Activated CD4-positive, alpha-beta T cell treated with anti-CD3 and anti-CD28 coated beads, Interleukin-2, amount 10 ng/mL, durations not matched to agents 24 days and 14 days (primary cell): ENCODE measurements at regions of chr12 and their contacts with region 1.

Region 1: DNA sequence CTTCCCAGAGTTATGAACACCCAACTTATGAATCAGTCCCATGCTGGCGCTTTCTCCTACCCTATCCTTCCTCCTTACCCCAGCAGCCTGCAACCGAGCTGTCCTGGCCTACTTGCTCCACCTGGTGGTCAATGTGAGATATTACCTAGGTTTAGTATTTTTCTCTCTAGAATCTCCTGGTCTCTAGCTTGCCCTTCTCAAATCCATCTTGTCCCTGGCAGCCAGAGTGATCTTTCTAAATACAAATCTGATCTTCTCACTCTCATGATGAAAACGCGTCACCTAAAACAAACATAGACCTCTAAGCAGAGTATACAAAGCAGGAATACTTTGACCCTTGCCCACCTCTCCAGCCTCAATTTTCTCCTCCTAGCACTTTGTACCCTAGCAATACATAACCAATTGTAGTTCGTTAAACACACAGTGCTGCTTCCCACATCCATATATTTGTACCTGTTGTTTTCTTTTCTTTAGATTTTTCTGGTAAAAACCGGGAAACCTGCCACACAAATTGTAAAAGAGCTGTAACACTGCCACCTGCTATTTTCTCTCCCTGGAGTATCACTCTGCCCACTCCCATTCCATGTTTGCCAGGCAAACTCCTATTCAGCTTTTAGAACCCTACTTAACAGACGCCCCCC is 20.0 kb upstream of the TCP11L2 start:
- DNase-seq: peak; percentile 84
- H3K4me3 Mint-ChIP-seq: no peak overlapping the region
- H3K27ac Mint-ChIP-seq: no peak overlapping the region
- H3K4me1 Mint-ChIP-seq: peaks cover 11% of the 10 kb centered on the region
- H3K27me3 Mint-ChIP-seq: peaks cover 18% of the 10 kb centered on the region

Region 2: GRCh38 chr12:106247674-106248311 is 34.8 kb before region 1 on chr12 and contains the start of gene CKAP4:
- intact Hi-C with region 1: loop called (anchors 5 kb)
- DNase-seq: peak; percentile 85
- H3K4me3 Mint-ChIP-seq: peak within 1 kb of the TSS; percentile 78
- H3K27ac Mint-ChIP-seq: peak within 1 kb of the TSS; percentile 62
- H3K4me1 Mint-ChIP-seq: peaks cover 9% of the 10 kb centered on the region
- H3K27me3 Mint-ChIP-seq: peaks cover 12% of the 10 kb centered on the region
- total RNA-seq, gene CKAP4: 6.7 and 7.7 TPM in 2 replicates

Region 3: GRCh38 chr12:106527356-106527755 is 244.8 kb after region 1 on chr12:
- intact Hi-C with region 1: no loop called
- DNase-seq: no peak
- H3K4me3 Mint-ChIP-seq: no peak overlapping the region
- H3K27ac Mint-ChIP-seq: no peak overlapping the region
- H3K4me1 Mint-ChIP-seq: no peaks in the 10 kb centered on the region
- H3K27me3 Mint-ChIP-seq: peaks cover 7% of the 10 kb centered on the region